ENCODE measurements at regions of chr11 and their contacts with region 1.

Region 1: GRCh38 chr11:59273373-59273841 is 60.7 kb upstream of the MPEG1 start:
- DNase-seq: peak in 4 of 5 donors; percentile 10 to 37 (median 30)
- H3K4me3 ChIP-seq: no peak overlapping the region
- H3K4me3 Mint-ChIP-seq: peak overlapping the region in 7 of 8 donors; percentile 32 to 79 (median 67)
- H3K27ac ChIP-seq: peak overlapping the region; percentile 0
- H3K27ac Mint-ChIP-seq: peak overlapping the region; percentile 36 to 93 (median 85)
- H3K4me1 ChIP-seq: peaks cover 24% of the 10 kb centered on the region
- H3K4me1 Mint-ChIP-seq: peaks cover 19 to 53% (median 41%) of the 10 kb centered on the region in 4 donors
- H3K27me3 ChIP-seq: no peaks in the 10 kb centered on the region
- H3K27me3 Mint-ChIP-seq: no peaks in the 10 kb centered on the region

Region 2: DNA sequence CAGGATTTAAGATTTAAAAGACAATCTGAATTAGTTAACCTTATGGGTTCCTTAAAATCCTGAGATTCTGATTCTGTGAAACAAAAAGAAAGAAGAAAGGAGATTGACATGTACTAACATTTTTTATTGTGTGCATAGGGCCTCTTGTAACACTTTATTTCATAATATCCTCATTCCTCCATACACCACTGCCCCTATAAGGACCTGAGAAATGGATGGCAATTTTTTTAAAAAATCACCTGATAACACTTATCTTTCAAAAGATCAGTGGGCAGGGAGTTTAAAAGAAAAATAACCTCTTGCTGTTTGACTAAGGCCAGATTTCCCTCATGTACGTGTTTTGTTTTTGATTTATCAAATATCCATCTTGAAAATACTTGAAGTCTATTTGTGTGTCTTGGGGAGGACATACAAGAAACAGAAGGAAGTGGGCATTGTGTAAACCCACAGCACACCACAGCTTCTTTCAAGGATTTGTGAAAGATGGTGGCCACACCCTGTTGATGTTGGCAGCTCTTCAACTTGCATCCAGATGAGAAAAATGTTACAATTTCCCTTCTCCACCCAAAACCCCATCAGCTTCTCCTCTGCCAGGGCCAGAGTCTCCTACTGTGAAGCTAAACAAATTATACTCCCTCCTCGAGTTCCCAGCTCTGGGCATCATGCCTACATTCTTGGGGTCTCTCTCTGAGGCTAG is 25.7 kb before region 1 on chr11:
- CTCF ChIA-PET with region 1: no interaction called
- POLR2A ChIA-PET with region 1: interaction called, 10 read pairs
- intact Hi-C with region 1: no loop called
- DNase-seq: peak in 4 of 5 donors; percentile 45 to 68 (median 60)
- H3K4me3 ChIP-seq: no peak overlapping the region
- H3K4me3 Mint-ChIP-seq: peak overlapping the region in 7 of 8 donors; percentile 1 to 69 (median 60)
- H3K27ac ChIP-seq: no peak overlapping the region
- H3K27ac Mint-ChIP-seq: peak overlapping the region; percentile 18 to 89 (median 57)
- H3K4me1 ChIP-seq: peaks cover 26% of the 10 kb centered on the region
- H3K4me1 Mint-ChIP-seq: peaks cover 21 to 54% (median 35%) of the 10 kb centered on the region in 4 donors
- H3K27me3 ChIP-seq: no peaks in the 10 kb centered on the region
- H3K27me3 Mint-ChIP-seq: peaks cover 0 to 3% of the 10 kb centered on the region in 2 donors

Region 3: GRCh38 chr11:59263225-59263894 is 10.0 kb before region 1 on chr11:
- CTCF ChIA-PET with region 1: interaction called, 10 read pairs
- POLR2A ChIA-PET with region 1: no interaction called
- intact Hi-C with region 1: no loop called
- DNase-seq: peak in 4 of 5 donors; percentile 16 to 30 (median 25)
- H3K4me3 ChIP-seq: no peak overlapping the region
- H3K4me3 Mint-ChIP-seq: no peak overlapping the region
- H3K27ac ChIP-seq: no peak overlapping the region
- H3K27ac Mint-ChIP-seq: no peak overlapping the region
- H3K4me1 ChIP-seq: no peaks in the 10 kb centered on the region
- H3K4me1 Mint-ChIP-seq: peaks cover 0 to 5% (median under 1%) of the 10 kb centered on the region in 4 donors
- H3K27me3 ChIP-seq: no peaks in the 10 kb centered on the region
- H3K27me3 Mint-ChIP-seq: no peaks in the 10 kb centered on the region

Region 4: DNA sequence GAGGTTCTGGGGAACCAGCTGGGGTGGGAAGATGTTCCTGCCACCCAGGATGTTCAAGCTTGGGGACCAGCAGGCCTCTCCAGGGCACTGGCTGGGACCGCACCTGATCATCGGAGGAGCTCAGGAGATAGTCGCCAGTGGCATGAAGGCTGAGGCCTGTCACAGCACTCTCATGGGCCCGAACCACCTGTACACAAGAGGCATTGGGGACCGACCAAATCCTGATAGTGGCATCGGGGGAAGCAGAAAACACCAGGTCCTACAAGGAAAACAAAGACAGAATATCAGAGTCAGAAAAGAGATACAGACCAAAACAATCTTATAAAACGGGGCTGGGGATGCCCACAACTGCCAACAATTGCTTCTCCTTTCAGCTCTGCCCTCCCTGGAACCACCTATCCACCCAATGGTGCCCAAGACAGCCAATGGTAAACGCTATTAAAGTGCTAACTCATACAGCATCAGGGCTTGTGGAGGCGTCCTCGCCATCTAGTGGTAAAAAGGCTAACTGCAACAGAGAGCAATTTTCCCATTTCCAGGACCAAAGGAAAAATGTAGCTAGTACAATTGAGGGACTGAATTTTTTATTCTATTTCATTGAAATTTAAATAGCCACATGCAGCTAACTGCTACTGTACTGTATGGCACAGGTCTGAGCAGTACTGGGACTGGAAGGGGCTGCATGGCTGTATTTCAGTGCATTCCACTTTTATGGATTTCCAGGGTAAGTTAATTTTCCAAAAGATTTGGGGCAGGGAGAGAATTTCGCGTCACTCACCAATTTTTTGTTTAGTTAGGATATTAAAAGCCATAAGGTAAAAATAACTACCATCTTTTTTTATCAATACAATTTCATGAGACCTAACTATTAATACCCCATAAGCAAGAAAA is 1625.9 kb after region 1 on chr11:
- CTCF ChIA-PET with region 1: no interaction called
- POLR2A ChIA-PET with region 1: no interaction called
- intact Hi-C with region 1: no loop called
- DNase-seq: peak in 4 of 5 donors; percentile 30 to 49 (median 44)
- H3K4me3 ChIP-seq: no peak overlapping the region
- H3K4me3 Mint-ChIP-seq: no peak overlapping the region
- H3K27ac ChIP-seq: no peak overlapping the region
- H3K27ac Mint-ChIP-seq: peak overlapping the region in 3 of 7 donors; percentile 13 to 49 (median 24)
- H3K4me1 ChIP-seq: peaks cover 10% of the 10 kb centered on the region
- H3K4me1 Mint-ChIP-seq: peaks cover 7 to 16% (median 11%) of the 10 kb centered on the region in 4 donors
- H3K27me3 ChIP-seq: no peaks in the 10 kb centered on the region
- H3K27me3 Mint-ChIP-seq: no peaks in the 10 kb centered on the region

Measured in CD4-positive, alpha-beta memory T cell (primary cell).